Caco-2 (cell line): ENCODE measurements at regions of chr11 and their contacts with region 1.

Region 1: DNA sequence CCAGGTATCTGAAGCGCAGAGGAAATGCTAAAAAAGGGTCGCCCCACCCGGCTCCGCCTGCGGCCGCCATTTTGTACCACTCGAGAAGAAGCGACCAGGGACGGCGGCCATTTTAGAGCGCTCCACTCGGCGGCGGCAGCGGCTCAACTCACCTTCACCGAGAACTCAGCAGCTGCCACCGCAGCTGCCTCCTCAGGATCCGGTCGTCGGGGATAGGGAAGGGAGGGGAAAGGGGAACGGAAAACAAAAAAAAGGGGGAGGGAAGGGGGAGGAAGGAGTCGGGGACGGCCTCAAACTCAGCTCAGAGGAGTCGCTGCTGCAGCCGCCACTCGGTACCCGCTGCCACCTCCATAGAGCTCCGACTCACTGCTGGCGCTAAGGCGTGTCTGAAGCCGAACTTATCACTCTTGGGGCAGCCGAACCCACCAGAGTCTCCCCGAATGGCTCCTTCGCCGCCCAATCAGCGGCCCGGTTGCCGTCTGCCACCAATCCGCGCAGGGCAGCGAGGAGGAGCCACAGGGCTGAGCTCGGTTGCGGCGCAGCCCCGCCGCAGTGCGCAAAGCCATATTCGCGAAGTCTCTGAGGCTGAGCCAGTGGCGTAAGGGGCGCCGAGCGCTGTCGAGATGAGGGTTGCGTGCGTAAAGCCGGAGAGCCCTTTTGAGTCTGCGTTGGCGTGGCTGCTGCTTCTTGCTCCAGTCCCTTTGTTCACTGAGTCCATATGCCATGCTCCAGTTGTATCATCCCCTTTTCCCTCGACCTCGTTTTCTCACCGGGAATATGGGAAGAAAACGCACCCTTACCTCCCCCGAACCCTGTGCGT is at the start of gene EIF4G2:
- DNase-seq: peak; percentile 98 to 99
- H3K4me3 ChIP-seq: peak within 1 kb of the TSS; percentile 92
- H3K4me3 Mint-ChIP-seq: peak within 1 kb of the TSS; percentile 98
- H3K27ac Mint-ChIP-seq: peak within 1 kb of the TSS; percentile 97
- H3K4me1 ChIP-seq: peaks cover 11% of the 10 kb centered on the region
- H3K4me1 Mint-ChIP-seq: peaks cover 11% of the 10 kb centered on the region
- H3K27me3 ChIP-seq: no peaks in the 10 kb centered on the region
- H3K27me3 Mint-ChIP-seq: no peaks in the 10 kb centered on the region
- CTCF ChIP-seq: no peak
- total RNA-seq, gene EIF4G2: 1,233 and 1,287 TPM in 2 replicates

Region 2: DNA sequence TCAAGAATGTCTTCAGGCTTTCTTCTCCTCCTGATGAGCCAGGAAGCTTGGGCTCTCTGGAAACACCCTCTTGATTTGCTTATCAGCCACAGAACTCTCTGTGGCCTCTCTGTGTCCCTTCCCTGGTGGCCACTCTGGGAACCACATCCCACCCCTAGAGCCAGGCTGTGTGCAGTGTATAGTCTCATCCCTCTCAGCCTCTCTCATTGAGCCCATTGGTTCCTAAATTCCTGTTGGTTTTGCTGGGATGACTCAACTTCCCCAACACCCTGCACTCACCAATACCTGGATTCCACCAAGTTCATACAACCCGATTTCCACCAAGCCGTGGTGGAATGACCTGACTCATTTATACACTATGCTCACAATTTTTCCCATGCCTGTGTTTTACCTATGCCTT is 120.4 kb before region 1 on chr11:
- CTCF ChIA-PET with region 1: no interaction called
- POLR2A ChIA-PET with region 1: no interaction called
- intact Hi-C with region 1: no loop called
- DNase-seq: no peak
- H3K4me3 ChIP-seq: no peak overlapping the region
- H3K4me3 Mint-ChIP-seq: no peak overlapping the region
- H3K27ac Mint-ChIP-seq: no peak overlapping the region
- H3K4me1 ChIP-seq: no peaks in the 10 kb centered on the region
- H3K4me1 Mint-ChIP-seq: peaks cover 5% of the 10 kb centered on the region
- H3K27me3 ChIP-seq: no peaks in the 10 kb centered on the region
- H3K27me3 Mint-ChIP-seq: no peaks in the 10 kb centered on the region
- CTCF ChIP-seq: no peak

Region 3: GRCh38 chr11:10770626-10771254 is 38.0 kb before region 1 on chr11:
- CTCF ChIA-PET with region 1: interaction called, 12 read pairs
- POLR2A ChIA-PET with region 1: interaction called, 6 read pairs
- intact Hi-C with region 1: no loop called
- DNase-seq: peak; percentile 59 to 60
- H3K4me3 ChIP-seq: no peak overlapping the region
- H3K4me3 Mint-ChIP-seq: no peak overlapping the region
- H3K27ac Mint-ChIP-seq: no peak overlapping the region
- H3K4me1 ChIP-seq: no peaks in the 10 kb centered on the region
- H3K4me1 Mint-ChIP-seq: no peaks in the 10 kb centered on the region
- H3K27me3 ChIP-seq: no peaks in the 10 kb centered on the region
- H3K27me3 Mint-ChIP-seq: no peaks in the 10 kb centered on the region
- CTCF ChIP-seq: peak; percentile 79 to 86

Region 4: DNA sequence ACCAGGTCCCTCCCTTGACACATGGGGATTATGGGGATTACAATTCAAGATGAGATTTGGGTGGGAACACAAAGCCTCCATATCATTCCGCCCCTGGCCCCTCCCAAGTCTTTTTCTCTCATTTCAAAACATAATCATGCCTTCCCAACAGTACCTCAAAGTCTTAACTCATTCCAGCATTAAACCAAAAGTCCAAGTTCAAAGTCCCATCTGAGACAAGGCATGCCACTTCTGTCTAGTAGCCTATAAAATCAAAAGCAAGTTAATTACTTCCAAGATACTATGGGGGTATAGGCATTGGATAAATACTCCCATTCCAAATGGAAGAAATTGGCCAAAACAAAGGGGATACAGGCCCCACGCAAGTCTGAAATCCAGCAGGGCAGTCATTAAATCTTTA is 19.6 kb after region 1 on chr11:
- CTCF ChIA-PET with region 1: interaction called, 5 read pairs
- POLR2A ChIA-PET with region 1: interaction called, 11 read pairs
- intact Hi-C with region 1: no loop called
- DNase-seq: no peak
- H3K4me3 ChIP-seq: no peak overlapping the region
- H3K4me3 Mint-ChIP-seq: no peak overlapping the region
- H3K27ac Mint-ChIP-seq: no peak overlapping the region
- H3K4me1 ChIP-seq: no peaks in the 10 kb centered on the region
- H3K4me1 Mint-ChIP-seq: peaks cover 6% of the 10 kb centered on the region
- H3K27me3 ChIP-seq: no peaks in the 10 kb centered on the region
- H3K27me3 Mint-ChIP-seq: no peaks in the 10 kb centered on the region
- CTCF ChIP-seq: no peak

Region 5: GRCh38 chr11:10857709-10858438 is 49.1 kb after region 1 on chr11 and contains the start of gene ZBED5:
- CTCF ChIA-PET with region 1: interaction called, 25 read pairs
- POLR2A ChIA-PET with region 1: interaction called, 174 read pairs
- intact Hi-C with region 1: loop called (anchors 1 kb)
- DNase-seq: peak; percentile 96 to 97
- H3K4me3 ChIP-seq: peak within 1 kb of the TSS; percentile 90
- H3K4me3 Mint-ChIP-seq: peak within 1 kb of the TSS; percentile 97
- H3K27ac Mint-ChIP-seq: peak within 1 kb of the TSS; percentile 96
- H3K4me1 ChIP-seq: peaks cover 7% of the 10 kb centered on the region; the same call in 1 of the 2 replicates
- H3K4me1 Mint-ChIP-seq: peaks cover 13% of the 10 kb centered on the region
- H3K27me3 ChIP-seq: no peaks in the 10 kb centered on the region
- H3K27me3 Mint-ChIP-seq: no peaks in the 10 kb centered on the region
- CTCF ChIP-seq: peak; percentile 23 to 29
- total RNA-seq, gene ZBED5: 42.1 and 53.2 TPM in 2 replicates

Region 6: DNA sequence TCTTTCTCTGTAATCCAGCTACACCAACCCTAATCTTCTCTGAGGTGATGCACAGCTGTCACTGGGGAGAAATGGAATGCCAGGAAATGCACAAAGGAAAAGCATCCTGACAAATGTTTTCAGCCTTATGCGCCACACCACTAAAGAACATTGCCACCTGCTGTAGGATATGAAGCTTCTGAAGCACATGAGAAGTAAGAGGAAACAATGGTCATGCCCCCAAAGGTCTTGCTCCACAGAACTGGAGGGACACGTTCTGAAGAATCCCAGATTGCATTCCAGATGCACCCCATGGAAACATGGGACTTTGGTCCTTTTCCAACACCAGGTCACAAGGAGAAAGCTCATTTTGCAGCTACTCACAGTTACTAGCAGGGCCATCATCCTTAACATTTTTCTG is 97.8 kb after region 1 on chr11:
- CTCF ChIA-PET with region 1: interaction called, 5 read pairs
- POLR2A ChIA-PET with region 1: interaction called, 46 read pairs
- intact Hi-C with region 1: no loop called
- DNase-seq: peak; percentile 47 to 59
- H3K4me3 ChIP-seq: no peak overlapping the region
- H3K4me3 Mint-ChIP-seq: no peak overlapping the region
- H3K27ac Mint-ChIP-seq: no peak overlapping the region
- H3K4me1 ChIP-seq: peaks cover 20% of the 10 kb centered on the region
- H3K4me1 Mint-ChIP-seq: peaks cover 26% of the 10 kb centered on the region
- H3K27me3 ChIP-seq: no peaks in the 10 kb centered on the region
- H3K27me3 Mint-ChIP-seq: no peaks in the 10 kb centered on the region
- CTCF ChIP-seq: peak; percentile 13 to 27

Region 7: GRCh38 chr11:11016068-11016467 is 207.3 kb after region 1 on chr11:
- CTCF ChIA-PET with region 1: no interaction called
- POLR2A ChIA-PET with region 1: interaction called, 10 read pairs
- intact Hi-C with region 1: no loop called
- DNase-seq: peak; percentile 32 to 57
- H3K4me3 ChIP-seq: no peak overlapping the region
- H3K4me3 Mint-ChIP-seq: no peak overlapping the region
- H3K27ac Mint-ChIP-seq: no peak overlapping the region
- H3K4me1 ChIP-seq: peaks cover 22% of the 10 kb centered on the region
- H3K4me1 Mint-ChIP-seq: peaks cover 29% of the 10 kb centered on the region
- H3K27me3 ChIP-seq: no peaks in the 10 kb centered on the region
- H3K27me3 Mint-ChIP-seq: no peaks in the 10 kb centered on the region
- CTCF ChIP-seq: no peak